WTC11 (cell line): ENCODE measurements at regions of chr14 and their contacts with region 1.

Region 1: GRCh38 chr14:21103710-21104447 is 3.0 kb downstream of the TMEM253 start:
- DNase-seq: peak; percentile 96
- ATAC-seq: peak; percentile 79
- H3K4me3 Mint-ChIP-seq: peak overlapping the region; percentile 93
- H3K27ac Mint-ChIP-seq: peak overlapping the region; percentile 87
- H3K4me1 Mint-ChIP-seq: peaks cover 73% of the 10 kb centered on the region
- H3K27me3 Mint-ChIP-seq: no peaks in the 10 kb centered on the region
- CTCF ChIP-seq: peak; percentile 24; the same call in 1 of the 2 replicates

Region 2: DNA sequence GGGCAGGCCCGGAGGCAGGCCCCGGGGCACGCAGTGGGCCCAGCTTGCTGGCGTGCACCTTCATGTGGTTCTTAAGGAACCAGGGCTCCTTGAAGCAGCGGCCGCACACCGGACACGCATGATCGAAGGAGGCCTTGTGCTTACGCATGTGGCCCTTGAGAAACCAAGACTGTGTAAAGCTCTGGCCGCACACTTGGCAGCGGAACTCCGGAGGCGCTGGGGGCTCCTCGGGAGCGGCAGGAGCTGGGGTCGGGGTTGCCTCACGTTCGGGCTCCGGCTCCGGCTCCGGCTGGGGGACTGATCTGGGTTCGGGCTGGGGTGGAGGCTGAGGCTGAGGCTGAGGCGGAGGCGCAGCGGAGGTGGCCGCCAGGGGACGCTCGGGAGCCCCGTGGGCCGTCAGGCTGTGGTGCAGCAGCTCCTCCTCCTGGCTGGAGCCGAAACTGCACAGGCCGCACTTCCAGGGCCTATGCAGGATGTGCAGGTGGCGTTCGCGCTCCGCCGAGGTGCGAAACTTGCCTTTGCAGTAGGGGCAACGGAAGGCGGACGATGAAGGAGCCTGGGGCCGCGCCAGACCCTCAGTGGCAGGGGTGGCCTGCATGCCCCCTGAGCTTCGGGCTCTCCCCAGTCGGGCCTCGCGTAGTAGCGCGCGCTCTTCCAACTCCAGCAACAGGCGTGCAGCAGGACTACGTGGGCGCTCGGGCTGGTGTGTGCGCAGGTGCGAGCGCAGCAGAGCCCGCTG is 11.4 kb before region 1 on chr14:
- CTCF ChIA-PET with region 1: interaction called, 321 read pairs
- POLR2A ChIA-PET with region 1: interaction called, 40 read pairs
- DNase-seq: peak; percentile 94
- ATAC-seq: peak; percentile 27
- H3K4me3 Mint-ChIP-seq: peak overlapping the region; percentile 66
- H3K27ac Mint-ChIP-seq: peak overlapping the region; percentile 94
- H3K4me1 Mint-ChIP-seq: peaks cover 64% of the 10 kb centered on the region
- H3K27me3 Mint-ChIP-seq: no peaks in the 10 kb centered on the region
- CTCF ChIP-seq: peak; percentile 100